Panc1 (cell line): ENCODE measurements at regions of chr5 and their contacts with region 1.

Region 1: DNA sequence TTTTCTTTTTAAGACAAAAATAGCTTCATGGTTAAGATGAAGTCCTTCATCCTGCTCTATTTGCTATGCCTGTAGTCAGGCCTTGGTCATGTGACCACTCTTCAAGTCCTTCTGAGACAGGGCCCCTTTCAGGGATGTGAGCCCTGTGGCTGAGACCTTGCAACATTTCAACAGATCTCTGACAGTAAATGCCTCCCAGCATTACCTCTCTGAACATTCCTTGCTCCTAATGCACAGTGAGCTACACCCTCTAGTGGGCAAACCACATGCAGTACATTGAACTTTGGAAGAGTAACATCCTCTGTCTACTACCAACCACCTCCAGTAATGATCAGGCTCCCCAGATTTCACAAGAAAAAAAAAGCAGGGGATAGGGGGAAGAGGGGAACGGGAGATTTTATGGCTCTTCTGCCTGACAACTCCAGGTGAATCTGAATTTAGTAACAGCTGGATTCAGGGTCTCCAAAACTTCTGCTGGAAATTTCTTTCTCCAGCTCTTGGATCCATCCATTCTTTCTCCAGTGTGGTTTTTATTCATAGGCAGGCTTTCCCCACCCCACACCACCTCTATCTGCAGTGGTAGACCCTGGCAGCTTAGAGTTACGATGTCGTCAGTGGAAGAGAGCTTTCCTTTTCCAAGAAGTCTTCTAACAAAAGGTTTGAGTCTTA is 8.9 kb upstream of the FBXO38 start:
- DNase-seq: peak; percentile 35
- ATAC-seq: peak; percentile 95
- H3K4me3 ChIP-seq: no peak overlapping the region
- H3K27ac ChIP-seq: no peak overlapping the region
- H3K4me1 ChIP-seq: no peaks in the 10 kb centered on the region
- H3K27me3 ChIP-seq: no peaks in the 10 kb centered on the region; the same call in 1 of the 2 replicates
- CTCF ChIP-seq: peak; percentile 84

Region 2: DNA sequence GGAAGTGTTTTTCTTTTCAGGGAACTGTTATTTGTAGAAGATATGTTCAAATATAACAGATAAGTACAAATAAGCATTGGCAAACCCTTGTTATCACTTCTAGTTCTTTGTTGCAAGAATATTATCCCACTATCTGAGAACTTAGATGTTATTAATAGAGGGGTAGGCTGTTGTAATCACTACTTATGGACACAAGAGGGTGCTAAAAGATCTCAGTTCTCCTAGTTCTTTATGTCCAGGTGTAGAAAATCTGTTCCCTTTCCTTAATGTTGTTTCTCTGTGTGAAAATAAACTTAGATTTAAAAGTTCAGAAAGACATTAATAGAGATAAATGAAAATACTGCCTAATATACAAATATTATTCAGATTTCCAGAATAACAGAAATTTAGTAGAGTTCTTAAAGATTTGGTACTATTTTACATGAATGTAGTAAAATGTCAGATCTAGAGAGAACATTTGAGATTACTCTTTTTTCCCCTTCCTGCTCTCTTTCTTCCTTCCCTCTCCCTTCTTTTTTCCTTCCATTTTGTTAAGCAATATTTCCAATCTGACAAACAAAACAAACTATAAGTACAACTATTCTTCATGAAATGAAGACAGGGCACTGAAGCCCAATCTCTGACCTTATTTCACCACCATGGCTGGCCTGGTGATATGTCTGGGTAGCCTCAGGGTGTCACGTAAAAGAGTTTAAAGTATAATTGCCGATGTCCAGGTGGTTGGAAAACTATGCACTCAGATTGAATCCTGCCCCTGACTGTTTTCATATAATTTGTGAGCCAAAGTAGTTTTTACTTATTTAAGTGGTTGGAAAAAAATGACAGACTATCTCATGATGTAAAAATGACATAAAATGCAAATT is 424.9 kb before region 1 on chr5:
- CTCF ChIA-PET with region 1: no interaction called
- POLR2A ChIA-PET with region 1: no interaction called
- in situ Hi-C with region 1: no loop called
- intact Hi-C with region 1: loop called (anchors 5 kb)
- DNase-seq: peak; percentile 25
- ATAC-seq: peak; percentile 84
- H3K4me3 ChIP-seq: no peak overlapping the region
- H3K27ac ChIP-seq: no peak overlapping the region
- H3K4me1 ChIP-seq: no peaks in the 10 kb centered on the region
- H3K27me3 ChIP-seq: no peaks in the 10 kb centered on the region
- CTCF ChIP-seq: peak; percentile 65; the same call in 1 of the 2 replicates

Region 3: DNA sequence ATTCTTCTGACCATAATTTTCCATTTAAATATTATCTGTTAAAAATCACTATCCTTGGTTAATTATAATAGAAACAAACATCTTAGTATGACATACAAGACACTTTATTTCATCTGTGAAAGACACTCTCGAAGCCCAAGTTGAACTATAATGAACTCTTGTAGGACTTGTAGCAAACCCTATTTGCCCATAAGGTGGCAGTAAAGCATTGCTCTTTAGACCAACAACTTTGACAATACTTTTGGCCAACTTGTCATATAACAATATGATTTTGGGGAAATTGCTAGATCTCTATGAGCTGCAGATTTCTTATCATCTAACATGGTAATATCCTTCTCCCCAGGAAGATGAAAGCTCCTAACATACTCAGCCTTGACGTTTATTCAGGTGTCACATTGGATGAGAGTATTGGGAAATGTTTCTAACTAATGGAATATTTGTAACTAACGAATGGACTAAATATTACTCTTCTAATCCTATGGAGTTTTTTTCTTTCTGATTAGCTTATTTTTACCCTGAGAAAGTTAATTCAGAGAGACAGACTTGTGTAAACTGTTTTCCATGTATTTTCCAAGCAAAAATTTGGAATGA is 195.5 kb before region 1 on chr5:
- CTCF ChIA-PET with region 1: no interaction called
- POLR2A ChIA-PET with region 1: no interaction called
- in situ Hi-C with region 1: no loop called
- intact Hi-C with region 1: loop called (anchors 1 kb)
- DNase-seq: peak; percentile 45
- ATAC-seq: peak; percentile 63; the same call in 1 of the 2 replicates
- H3K4me3 ChIP-seq: no peak overlapping the region
- H3K27ac ChIP-seq: no peak overlapping the region
- H3K4me1 ChIP-seq: no peaks in the 10 kb centered on the region
- H3K27me3 ChIP-seq: no peaks in the 10 kb centered on the region
- CTCF ChIP-seq: peak; percentile 67; the same call in 1 of the 2 replicates

Region 4: GRCh38 chr5:148290271-148291195 is 84.3 kb before region 1 on chr5:
- CTCF ChIA-PET with region 1: no interaction called
- POLR2A ChIA-PET with region 1: no interaction called
- in situ Hi-C with region 1: no loop called
- intact Hi-C with region 1: loop called (anchors 5 kb)
- DNase-seq: no peak
- ATAC-seq: 0 out of 2 replicates have a peak, but pooled peaks have one; percentile 34
- H3K4me3 ChIP-seq: no peak overlapping the region
- H3K27ac ChIP-seq: no peak overlapping the region
- H3K4me1 ChIP-seq: no peaks in the 10 kb centered on the region
- H3K27me3 ChIP-seq: no peaks in the 10 kb centered on the region; the same call in 1 of the 2 replicates
- CTCF ChIP-seq: peak; percentile 55; the same call in 1 of the 2 replicates